GM13977 (cell line): ENCODE measurements at regions of chr1 and their contacts with region 1.

Region 1: DNA sequence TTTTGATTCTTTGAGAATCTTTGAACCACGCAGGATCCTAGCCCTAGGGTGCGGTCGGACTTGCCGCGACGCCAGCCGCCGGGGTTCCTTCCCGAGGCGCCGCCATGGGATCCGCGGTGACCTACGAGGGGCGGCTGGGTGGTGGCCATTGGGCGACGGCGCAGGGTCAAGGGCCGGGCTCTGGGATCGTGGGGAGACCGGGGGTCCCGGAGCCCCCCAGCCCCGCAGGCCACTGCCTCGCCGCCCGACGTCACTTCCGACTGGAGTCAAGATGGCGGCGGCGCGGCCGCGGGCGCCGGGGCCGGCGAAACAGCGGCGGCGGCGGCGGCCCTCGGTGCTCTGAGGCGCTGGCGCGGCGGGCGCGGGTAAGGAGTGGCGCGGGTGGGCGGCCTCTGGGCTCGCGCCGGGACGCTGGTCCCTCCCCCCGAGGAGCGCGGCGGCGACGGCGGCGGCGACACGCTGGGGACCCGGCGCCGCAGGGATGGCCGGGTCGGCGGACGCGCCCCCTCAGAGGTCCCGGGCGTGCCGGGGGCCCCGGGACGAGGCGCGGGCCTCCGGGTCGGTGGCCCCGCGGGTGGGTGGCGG is at the start of gene PRDM2:
- DNase-seq: peak; percentile 78
- CTCF ChIP-seq: no peak

Region 2: DNA sequence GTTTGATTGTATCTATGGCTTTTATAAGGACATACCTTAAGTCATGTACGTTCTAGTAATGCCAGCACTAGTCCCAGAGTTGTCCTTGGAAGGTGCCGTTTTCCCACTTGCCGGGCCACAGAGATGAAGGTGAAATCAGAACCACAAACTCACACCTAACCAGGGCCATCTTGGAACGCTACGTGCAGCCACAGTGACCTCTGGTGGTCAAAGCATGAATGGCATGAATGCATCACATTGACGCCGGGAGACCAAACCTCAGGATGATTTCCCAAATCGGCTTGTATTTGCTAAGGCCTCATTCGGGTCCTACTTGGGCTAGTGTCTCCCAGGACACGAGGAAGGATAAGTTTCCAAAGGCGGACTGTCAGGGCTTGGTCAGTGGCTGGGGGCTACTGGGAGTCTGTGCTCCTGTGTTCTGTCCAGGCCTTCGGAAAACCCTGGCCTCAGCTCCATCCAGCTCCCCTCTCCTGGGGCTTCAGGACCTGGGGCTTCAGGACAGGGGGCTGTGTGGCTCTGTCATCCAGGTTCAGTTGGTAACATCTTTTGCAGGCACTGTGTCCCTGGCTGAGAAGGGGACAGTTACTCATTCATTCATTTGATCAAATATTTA is 260.5 kb after region 1 on chr1:
- in situ Hi-C with region 1: loop called (anchors 25 kb)
- DNase-seq: peak; percentile 74
- CTCF ChIP-seq: peak; percentile 90